HepG2 (cell line): ENCODE measurements at regions of chr14 and their contacts with region 1.

Region 1: DNA sequence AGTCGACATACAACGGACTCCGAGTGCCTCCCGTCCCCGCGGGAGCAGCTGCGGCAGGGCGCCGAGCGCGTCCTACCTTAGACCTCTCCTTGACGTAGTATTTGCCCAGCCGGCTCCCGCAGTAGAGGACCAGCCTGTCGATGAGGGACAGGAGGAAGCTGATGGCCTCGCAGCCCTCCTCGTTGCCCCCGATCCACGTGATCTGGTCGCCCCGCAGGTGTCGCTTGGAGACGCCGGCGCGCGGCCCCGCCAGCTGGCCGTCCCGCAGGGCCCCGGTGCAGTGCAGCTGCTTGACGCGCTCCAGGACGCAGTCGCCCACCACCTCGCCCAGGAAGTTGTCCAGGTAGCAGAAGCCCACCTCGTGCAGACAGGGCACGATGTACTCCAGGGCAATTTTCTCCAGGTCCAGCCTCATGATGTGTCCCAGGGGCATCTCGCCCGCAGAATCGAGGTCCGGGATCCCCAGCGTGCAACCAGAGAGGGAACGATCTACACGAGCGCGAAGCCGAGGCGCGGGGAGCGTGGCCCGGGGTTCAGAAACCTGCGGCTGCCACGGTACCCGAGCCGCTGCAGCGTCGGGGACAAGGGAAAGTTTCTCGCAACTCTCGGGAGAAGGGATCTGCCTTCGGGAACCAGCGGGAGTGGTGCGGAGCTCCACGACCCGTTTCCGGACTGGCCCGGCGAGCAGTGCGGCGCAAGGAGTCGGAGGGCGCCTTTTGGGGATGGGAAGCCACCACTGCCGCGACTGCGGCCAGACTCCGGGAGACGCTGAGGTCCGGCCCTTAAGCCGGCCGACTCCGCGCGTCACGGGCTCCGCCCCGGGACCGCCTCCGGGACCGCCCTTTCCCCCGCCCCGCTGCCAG is at the start of gene EGLN3:
- DNase-seq: peak; percentile 55
- ATAC-seq: peak; percentile 97
- H3K4me3 ChIP-seq: peak within 1 kb of the TSS; percentile 38 to 78 (median 58)
- H3K27ac ChIP-seq: peak within 1 kb of the TSS; percentile 1
- H3K4me1 ChIP-seq: peaks cover 9% of the 10 kb centered on the region
- H3K27me3 ChIP-seq: peaks cover 0 to 43% of the 10 kb centered on the region in 2 experiments; a peak in 3 of 5 replicates
- CTCF ChIP-seq: no peak
- EP300 ChIP-seq: no peak
- POLR2A ChIP-seq: peak in 1 of 2 experiments; percentile 100; a peak in 2 of 4 replicates
- RAD21 ChIP-seq: no peak
- total RNA-seq, gene EGLN3: 0.18 TPM in 2 replicates

Region 2: GRCh38 chr14:33848706-33849454 is 101.7 kb before region 1 on chr14:
- CTCF ChIA-PET with region 1: no interaction called
- POLR2A ChIA-PET with region 1: no interaction called
- in situ Hi-C with region 1: no loop called
- intact Hi-C with region 1: loop called (anchors 5 kb)
- DNase-seq: peak; percentile 81
- ATAC-seq: peak; percentile 97
- H3K4me3 ChIP-seq: no peak overlapping the region
- H3K27ac ChIP-seq: no peak overlapping the region
- H3K4me1 ChIP-seq: peaks cover 4% of the 10 kb centered on the region; the same call in 1 of the 2 replicates
- H3K27me3 ChIP-seq: peaks cover 0 to 5% of the 10 kb centered on the region in 2 experiments; a peak in 1 of 5 replicates
- CTCF ChIP-seq: peak; percentile 89
- EP300 ChIP-seq: no peak
- POLR2A ChIP-seq: no peak
- RAD21 ChIP-seq: peak; percentile 95